AG04450 (cell line): ENCODE measurements at regions of chr4 and their contacts with region 1.

Region 1: DNA sequence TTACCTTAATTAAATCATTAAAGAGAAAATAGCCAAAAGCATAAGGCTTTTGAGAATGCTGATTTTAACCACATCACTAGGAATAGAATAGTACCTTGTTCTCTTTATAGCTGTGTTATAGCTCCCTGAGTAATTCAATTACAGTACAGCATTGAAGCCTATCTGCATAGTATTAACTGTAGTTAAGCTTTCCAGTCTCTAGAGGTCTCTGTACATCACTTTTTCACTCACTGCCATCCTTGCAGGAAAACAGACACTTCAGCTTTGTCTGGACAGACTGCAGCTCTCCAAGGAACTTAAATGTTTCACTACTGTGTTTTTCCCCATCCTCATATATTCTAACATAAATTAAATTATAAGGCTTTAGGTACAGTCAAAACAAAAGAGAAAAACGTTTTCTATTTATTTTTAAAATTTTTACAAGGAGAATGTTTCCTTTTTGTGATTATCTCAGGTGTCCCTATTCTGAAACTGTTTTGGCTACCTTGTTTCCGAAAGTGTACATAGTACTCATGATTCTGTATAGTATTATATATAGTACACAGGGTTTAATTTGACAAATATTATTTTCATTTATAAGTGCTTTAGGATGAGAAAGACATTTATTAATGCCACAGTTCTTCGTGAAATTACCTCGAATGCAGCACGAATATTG is 407.9 kb downstream of the PCDH18 start:
- DNase-seq: peak; percentile 44
- H3K4me3 ChIP-seq: peak overlapping the region; percentile 20
- H3K27ac ChIP-seq: no peak overlapping the region
- H3K27me3 ChIP-seq: no peaks in the 10 kb centered on the region
- CTCF ChIP-seq: peak; percentile 76

Region 2: DNA sequence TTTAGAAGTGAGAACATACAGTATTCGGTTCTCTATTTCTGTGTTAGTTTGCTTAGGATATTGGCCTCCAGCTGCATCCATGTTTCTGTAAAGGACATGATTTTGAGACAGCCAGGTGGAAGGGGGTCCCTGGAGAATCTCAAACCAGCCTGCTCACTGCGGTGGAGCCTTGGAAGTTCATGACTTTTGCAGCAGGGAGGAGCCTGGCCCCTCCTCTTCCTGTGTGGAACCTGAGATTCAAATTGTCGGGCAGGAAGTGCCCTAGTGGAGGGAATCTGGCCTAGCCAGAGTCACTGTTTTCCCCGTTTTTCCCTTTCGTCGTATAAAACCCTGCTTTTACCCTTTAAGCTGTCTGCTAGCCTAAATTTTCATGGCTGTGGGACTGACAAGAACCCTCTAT is 354.7 kb before region 1 on chr4:
- CTCF ChIA-PET with region 1: no interaction called
- POLR2A ChIA-PET with region 1: no interaction called
- DNase-seq: no peak
- H3K4me3 ChIP-seq: no peak overlapping the region
- H3K27ac ChIP-seq: no peak overlapping the region
- H3K27me3 ChIP-seq: no peaks in the 10 kb centered on the region
- CTCF ChIP-seq: no peak

Region 3: DNA sequence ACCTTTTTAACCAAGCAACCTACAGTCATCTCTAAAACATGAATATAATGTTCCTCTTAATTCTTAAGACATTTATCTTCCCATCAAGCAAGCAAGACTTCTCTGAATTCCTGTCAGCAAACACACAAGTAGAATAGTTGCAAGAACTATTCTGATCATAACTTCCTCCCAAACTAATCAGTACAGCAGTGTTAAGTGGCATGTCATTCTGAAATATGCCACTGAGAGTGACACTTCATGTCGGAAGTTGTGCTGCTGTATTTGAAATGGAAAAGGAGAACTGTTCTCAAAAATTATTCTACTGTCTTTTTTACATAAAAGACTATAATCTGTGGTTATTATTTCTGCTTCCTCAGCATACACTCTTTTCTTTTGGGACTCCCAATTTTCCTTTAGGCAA is 138.7 kb before region 1 on chr4:
- CTCF ChIA-PET with region 1: no interaction called
- POLR2A ChIA-PET with region 1: no interaction called
- DNase-seq: no peak
- H3K4me3 ChIP-seq: no peak overlapping the region
- H3K27ac ChIP-seq: no peak overlapping the region
- H3K27me3 ChIP-seq: no peaks in the 10 kb centered on the region
- CTCF ChIP-seq: no peak

Region 4: DNA sequence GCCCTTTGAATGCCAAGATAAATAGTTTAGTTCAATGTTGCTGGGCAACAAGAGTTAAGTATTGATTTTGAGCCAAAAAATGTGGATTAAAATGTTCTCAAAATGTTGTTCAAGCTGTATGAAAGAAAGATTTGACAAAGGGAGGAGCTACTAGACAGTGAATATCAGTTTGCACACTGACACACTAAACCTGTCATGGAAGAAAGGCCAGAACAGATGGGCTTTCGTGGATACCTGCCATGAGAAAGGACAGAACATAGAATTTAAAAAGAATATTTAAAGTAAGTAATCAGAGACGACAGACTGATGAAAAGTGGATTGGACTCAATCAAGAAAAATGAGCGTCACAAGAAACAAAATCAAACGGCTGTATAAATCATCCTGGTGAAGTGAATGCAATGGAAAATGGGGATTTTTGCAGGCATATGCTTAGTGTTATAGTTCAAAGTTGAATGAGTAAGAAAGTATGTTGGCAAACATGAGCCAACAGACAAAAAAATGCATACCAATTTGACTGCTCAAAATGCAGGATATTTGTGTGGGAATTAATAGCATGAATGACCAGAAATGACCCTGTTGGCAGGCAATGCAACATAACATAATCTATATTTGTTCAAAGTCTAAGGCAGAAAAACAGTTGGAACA is 400.4 kb after region 1 on chr4:
- CTCF ChIA-PET with region 1: interaction called, 19 read pairs
- POLR2A ChIA-PET with region 1: interaction called, 4 read pairs
- DNase-seq: no peak
- H3K4me3 ChIP-seq: no peak overlapping the region; the same call in 1 of the 2 replicates
- H3K27ac ChIP-seq: no peak overlapping the region
- H3K27me3 ChIP-seq: no peaks in the 10 kb centered on the region
- CTCF ChIP-seq: no peak